Activated B cell treated with CpG ODN at 0.5 μM for 24 hours (primary cell): ENCODE measurements at regions of chr3 and their contacts with region 1.

Region 1: GRCh38 chr3:120095226-120095978 is 1.2 kb upstream of the GSK3B start:
- DNase-seq: peak; percentile 85
- ATAC-seq: peak; percentile 20
- H3K4me3 Mint-ChIP-seq: no peak overlapping the region
- H3K27ac Mint-ChIP-seq: no peak overlapping the region
- H3K4me1 Mint-ChIP-seq: peaks cover 12% of the 10 kb centered on the region
- H3K27me3 Mint-ChIP-seq: no peaks in the 10 kb centered on the region
- CTCF ChIP-seq: no peak

Region 2: GRCh38 chr3:119322835-119323722 is 772.3 kb before region 1 on chr3:
- CTCF ChIA-PET with region 1: no interaction called
- POLR2A ChIA-PET with region 1: interaction called, 7 read pairs
- intact Hi-C with region 1: loop called (anchors 1 kb)
- DNase-seq: peak; percentile 96
- ATAC-seq: peak; percentile 87
- H3K4me3 Mint-ChIP-seq: peak overlapping the region; percentile 87
- H3K27ac Mint-ChIP-seq: peak overlapping the region; percentile 94
- H3K4me1 Mint-ChIP-seq: peaks cover 59% of the 10 kb centered on the region
- H3K27me3 Mint-ChIP-seq: no peaks in the 10 kb centered on the region
- CTCF ChIP-seq: no peak

Region 3: DNA sequence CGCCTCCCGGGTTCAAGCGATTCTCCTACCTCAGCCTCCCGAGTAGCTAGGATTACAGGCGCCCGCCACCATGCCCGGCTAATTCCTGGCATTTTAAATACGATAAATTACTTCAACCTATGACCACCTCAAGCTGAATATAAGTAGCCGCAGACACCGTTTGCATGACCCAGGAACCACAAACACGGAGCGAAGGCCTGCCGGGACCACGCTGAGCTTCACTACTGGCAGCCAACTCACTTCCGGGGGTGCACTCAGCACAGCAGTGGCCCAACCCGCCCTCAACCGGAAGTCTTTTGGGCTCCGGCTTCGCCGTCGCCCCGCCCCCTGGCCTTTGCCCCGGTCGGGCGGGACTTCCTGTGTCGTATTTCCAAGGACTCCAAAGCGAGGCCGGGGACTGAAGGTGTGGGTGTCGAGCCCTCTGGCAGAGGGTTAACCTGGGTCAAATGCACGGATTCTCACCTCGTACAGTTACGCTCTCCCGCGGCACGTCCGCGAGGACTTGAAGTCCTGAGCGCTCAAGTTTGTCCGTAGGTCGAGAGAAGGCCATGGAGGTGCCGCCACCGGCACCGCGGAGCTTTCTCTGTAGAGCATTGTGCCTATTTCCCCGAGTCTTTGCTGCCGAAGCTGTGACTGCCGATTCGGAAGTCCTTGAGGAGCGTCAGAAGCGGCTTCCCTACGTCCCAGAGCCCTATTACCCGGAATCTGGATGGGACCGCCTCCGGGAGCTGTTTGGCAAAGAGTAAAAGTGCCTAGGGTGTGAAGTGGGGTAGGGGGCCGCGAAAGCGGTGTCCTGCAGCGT is 597.0 kb before region 1 on chr3 and contains the start of gene TIMMDC1:
- CTCF ChIA-PET with region 1: no interaction called
- POLR2A ChIA-PET with region 1: interaction called, 7 read pairs
- intact Hi-C with region 1: loop called (anchors 10 kb)
- DNase-seq: peak; percentile 96
- ATAC-seq: peak; percentile 98
- H3K4me3 Mint-ChIP-seq: peak within 1 kb of the TSS; percentile 99
- H3K27ac Mint-ChIP-seq: peak within 1 kb of the TSS; percentile 97
- H3K4me1 Mint-ChIP-seq: peaks cover 38% of the 10 kb centered on the region
- H3K27me3 Mint-ChIP-seq: no peaks in the 10 kb centered on the region
- CTCF ChIP-seq: no peak
- total RNA-seq, gene TIMMDC1: 73.0 and 76.1 TPM in 2 replicates

Region 4: DNA sequence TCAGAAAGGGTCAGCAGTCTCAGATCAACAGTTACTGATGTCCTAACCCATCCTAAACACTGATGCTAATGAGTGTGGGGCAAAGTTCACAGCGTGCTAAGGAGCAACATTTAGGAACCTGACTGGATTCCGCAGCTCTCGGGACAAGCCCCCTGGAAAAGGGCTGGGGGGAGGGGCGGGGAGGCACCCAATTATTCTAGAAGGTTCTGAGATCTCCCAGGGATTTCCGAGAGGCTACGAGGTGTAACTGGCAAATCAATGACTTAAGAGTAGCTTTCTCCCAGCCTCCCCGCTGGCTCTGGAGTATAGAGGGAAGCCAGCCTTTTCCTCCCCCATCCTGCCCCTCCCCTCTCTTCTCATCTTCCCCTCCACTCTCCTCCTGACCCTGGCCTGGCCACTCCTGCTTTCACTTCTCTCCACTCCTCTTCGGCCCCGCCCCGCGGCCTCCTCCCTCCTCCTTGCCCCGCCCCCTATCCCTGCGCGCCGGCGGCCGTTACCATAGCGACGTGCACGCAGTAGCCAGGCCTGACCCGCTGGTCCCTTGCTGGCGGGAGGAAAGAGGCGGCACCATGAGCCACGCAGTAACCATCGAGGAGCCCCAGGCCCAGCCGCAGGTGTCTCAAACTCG is 392.8 kb before region 1 on chr3 and contains the start of gene CFAP91:
- CTCF ChIA-PET with region 1: no interaction called
- POLR2A ChIA-PET with region 1: interaction called, 4 read pairs
- intact Hi-C with region 1: loop called (anchors 1 kb)
- DNase-seq: peak; percentile 86
- ATAC-seq: peak; percentile 92
- H3K4me3 Mint-ChIP-seq: peak within 1 kb of the TSS; percentile 86
- H3K27ac Mint-ChIP-seq: peak within 1 kb of the TSS; percentile 72
- H3K4me1 Mint-ChIP-seq: peaks cover 52% of the 10 kb centered on the region
- H3K27me3 Mint-ChIP-seq: no peaks in the 10 kb centered on the region
- CTCF ChIP-seq: no peak
- total RNA-seq, gene CFAP91: 8.5 and 12.9 TPM in 2 replicates

Region 5: DNA sequence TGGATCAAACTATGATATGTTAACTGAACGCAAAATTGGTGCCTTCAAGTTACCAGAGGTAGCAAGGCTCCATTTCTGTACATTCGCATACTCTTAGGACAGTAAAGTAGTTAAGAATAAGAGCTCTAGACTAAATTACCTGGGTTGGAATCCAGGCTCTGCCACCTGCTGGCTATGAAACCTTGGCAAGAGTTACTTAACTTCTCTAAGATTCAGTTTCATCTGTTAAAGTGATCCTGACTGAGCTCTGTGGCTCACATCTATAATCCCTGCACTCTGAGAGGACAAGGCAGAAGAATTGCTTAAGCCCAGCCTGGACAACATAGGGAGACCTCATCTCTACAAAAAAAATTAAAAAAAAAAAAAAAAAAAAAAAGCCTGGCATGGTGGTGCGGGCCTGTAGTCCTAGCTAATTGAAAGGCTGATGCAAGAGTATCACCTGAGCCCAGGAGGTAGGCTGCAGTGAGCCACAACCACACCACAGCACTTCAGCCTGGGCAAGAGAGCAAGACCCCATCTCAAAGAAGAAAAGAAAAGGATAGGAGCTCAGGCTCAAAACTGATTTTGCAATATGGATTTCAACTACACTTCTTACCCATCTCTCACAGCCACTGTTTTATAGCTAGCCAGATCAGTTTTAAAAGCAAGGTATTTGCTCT is 22.4 kb before region 1 on chr3:
- CTCF ChIA-PET with region 1: interaction called, 4 read pairs
- POLR2A ChIA-PET with region 1: interaction called, 11 read pairs
- intact Hi-C with region 1: no loop called
- DNase-seq: no peak
- ATAC-seq: no peak
- H3K4me3 Mint-ChIP-seq: no peak overlapping the region
- H3K27ac Mint-ChIP-seq: no peak overlapping the region
- H3K4me1 Mint-ChIP-seq: peaks cover 63% of the 10 kb centered on the region
- H3K27me3 Mint-ChIP-seq: no peaks in the 10 kb centered on the region
- CTCF ChIP-seq: no peak

Region 6: GRCh38 chr3:120417272-120417911 is 322.0 kb after region 1 on chr3:
- CTCF ChIA-PET with region 1: no interaction called
- POLR2A ChIA-PET with region 1: interaction called, 4 read pairs
- intact Hi-C with region 1: loop called (anchors 2 kb)
- DNase-seq: peak; percentile 61
- ATAC-seq: peak; percentile 100
- H3K4me3 Mint-ChIP-seq: peak overlapping the region; percentile 83
- H3K27ac Mint-ChIP-seq: peak overlapping the region; percentile 37
- H3K4me1 Mint-ChIP-seq: peaks cover 16% of the 10 kb centered on the region
- H3K27me3 Mint-ChIP-seq: no peaks in the 10 kb centered on the region
- CTCF ChIP-seq: no peak